ENCODE measurements at regions of chr11 and their contacts with region 1.

Region 1: DNA sequence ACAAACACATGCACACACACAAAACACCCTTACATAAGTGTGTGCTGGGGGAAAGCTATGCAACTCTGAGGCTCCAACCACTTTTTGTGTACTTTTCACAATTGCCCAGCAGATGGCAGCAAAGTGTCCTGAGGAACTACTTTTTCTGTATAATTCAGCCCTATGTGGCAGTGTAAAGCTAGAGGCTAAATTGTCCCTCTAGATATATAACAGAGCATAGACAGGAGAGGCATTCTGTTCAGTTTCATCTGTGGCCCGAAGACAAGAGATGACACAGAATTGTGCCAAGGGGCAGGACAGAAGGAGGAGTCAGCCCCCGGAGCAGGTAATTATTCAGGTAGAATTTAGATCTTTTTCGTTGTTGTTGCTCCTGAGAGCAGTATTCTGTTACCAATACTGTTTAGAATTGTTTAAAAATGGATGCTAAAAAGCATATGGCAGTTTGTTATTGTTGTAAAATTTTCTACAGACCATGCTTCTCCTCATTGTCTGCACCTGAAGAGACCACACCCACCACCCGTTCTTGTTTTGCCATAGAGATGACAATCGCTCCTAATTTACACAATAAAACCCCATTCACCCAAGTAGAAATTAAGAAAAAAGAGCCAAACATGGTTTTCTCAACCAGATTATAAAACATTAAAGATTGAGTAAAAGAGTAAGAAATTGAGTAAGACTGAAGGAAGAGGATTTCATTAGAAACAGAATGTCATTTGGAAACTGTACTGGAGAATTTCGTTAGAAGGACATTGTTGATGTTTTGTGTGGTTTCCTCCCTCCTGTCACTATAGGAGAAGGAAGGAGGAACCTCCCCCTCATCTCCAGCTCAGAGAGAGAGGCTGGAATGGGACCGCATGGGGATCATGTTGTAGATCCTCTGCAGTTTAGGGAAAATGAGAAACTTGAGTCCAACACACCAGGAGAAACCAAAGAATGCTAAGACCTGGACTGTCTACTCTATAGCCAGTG is 14.5 kb upstream of the MS4A7 start:
- DNase-seq: peak in 4 of 5 donors; percentile 28 to 60 (median 40)
- ATAC-seq: peak; percentile 55 to 80 (median 72)
- H3K4me3 ChIP-seq: peak overlapping the region in 1 of 12 donors; percentile 38
- H3K27ac ChIP-seq: peak overlapping the region in 3 of 12 donors; percentile 22 to 86 (median 39)
- H3K4me1 ChIP-seq: peaks cover 0 to 20% (median 0%) of the 10 kb centered on the region in 12 donors
- H3K27me3 ChIP-seq: peaks cover 0 to 11% (median 0%) of the 10 kb centered on the region in 9 donors
- CTCF ChIP-seq: peak; percentile 54 to 80 (median 69)
- POLR2A ChIP-seq: no peak

Region 2: DNA sequence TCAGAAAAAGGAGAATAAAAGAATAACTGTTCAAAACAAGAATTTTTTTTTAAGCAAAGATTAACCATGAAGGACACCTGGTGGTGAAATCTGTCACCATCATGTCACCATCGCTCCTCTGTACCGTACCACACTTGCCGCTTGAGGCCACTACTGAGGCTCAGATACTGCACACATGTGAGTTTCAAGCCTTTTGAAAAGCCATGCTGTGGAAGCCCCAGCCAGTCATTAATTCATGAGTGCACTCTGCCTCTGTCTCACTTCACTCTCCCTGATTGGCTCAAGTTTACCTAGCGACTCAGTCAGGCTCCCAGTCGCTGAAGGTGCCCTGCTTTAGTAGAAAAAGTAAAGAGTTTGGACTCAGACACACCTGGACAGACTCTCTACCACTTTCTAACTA is 122.2 kb after region 1 on chr11:
- intact Hi-C with region 1: loop called in 1 of 10 experiments (anchors 5 kb)
- DNase-seq: no peak
- ATAC-seq: no peak
- H3K4me3 ChIP-seq: no peak overlapping the region
- H3K27ac ChIP-seq: no peak overlapping the region
- H3K4me1 ChIP-seq: peaks cover 0 to 8% (median 0%) of the 10 kb centered on the region in 12 donors
- H3K27me3 ChIP-seq: peaks cover 0 to 3% (median 0%) of the 10 kb centered on the region in 9 donors
- CTCF ChIP-seq: peak in 2 of 12 donors; percentile 17 to 44
- POLR2A ChIP-seq: no peak

Region 3: DNA sequence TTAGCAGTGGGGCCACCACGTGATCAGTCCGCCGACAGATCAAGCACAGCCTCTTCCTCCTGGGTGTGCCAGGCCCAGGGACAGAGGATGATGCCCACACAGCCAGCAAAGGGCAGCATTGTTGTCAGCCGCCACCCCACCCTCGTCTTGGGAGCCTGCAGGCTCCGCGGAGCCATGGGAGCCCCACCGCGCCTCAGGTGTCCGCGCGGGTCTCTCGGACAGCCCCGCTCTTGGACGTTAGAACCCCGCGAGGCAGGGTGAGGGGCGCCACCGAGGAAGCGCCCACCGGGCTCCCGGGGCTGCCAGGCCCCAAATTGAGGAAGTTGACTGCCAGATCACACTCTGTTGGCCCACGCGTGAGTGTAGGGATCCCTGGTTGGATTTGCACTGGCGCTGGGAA is 251.7 kb after region 1 on chr11:
- intact Hi-C with region 1: loop called in 9 of 10 experiments (anchors 2 to 5 kb)
- DNase-seq: no peak
- ATAC-seq: no peak
- H3K4me3 ChIP-seq: no peak overlapping the region
- H3K27ac ChIP-seq: no peak overlapping the region
- H3K4me1 ChIP-seq: no peaks in the 10 kb centered on the region
- H3K27me3 ChIP-seq: peaks cover 0 to 7% (median 0%) of the 10 kb centered on the region in 9 donors
- CTCF ChIP-seq: no peak
- POLR2A ChIP-seq: no peak